HepG2 (cell line): ENCODE measurements at regions of chr21 and their contacts with region 1.

Region 1: DNA sequence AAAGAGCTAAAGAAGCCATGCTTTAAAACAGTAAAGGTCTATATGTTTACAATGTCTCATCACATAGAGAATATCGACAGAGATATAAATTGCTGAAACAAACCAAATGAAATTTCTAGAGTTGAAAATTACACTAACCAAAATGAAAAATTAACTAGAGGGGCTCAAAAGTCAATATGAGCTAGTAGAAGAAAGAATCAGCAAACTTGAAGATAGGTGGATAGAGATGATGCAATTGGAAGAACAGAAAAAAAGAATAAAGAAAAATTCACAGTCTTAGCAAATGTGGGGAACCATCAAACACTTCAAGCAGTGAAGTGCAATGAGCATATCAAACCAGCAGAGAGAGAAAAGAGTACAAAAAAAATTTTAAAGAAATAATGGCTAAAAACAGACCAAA is 24.1 kb upstream of the DSCAM start:
- DNase-seq: no peak
- ATAC-seq: no peak
- H3K4me3 ChIP-seq: no peak overlapping the region
- H3K27ac ChIP-seq: no peak overlapping the region
- H3K4me1 ChIP-seq: no peaks in the 10 kb centered on the region
- H3K27me3 ChIP-seq: no peaks in the 10 kb centered on the region; a peak in 1 of 5 replicates
- CTCF ChIP-seq: no peak
- EP300 ChIP-seq: no peak
- POLR2A ChIP-seq: no peak
- RAD21 ChIP-seq: no peak

Region 2: GRCh38 chr21:40797891-40798290 is 73.2 kb before region 1 on chr21:
- CTCF ChIA-PET with region 1: no interaction called
- POLR2A ChIA-PET with region 1: no interaction called
- in situ Hi-C with region 1: no loop called
- intact Hi-C with region 1: no loop called
- DNase-seq: no peak
- ATAC-seq: no peak
- H3K4me3 ChIP-seq: no peak overlapping the region
- H3K27ac ChIP-seq: no peak overlapping the region
- H3K4me1 ChIP-seq: no peaks in the 10 kb centered on the region
- H3K27me3 ChIP-seq: no peaks in the 10 kb centered on the region
- CTCF ChIP-seq: no peak
- EP300 ChIP-seq: no peak
- POLR2A ChIP-seq: no peak
- RAD21 ChIP-seq: no peak

Region 3: DNA sequence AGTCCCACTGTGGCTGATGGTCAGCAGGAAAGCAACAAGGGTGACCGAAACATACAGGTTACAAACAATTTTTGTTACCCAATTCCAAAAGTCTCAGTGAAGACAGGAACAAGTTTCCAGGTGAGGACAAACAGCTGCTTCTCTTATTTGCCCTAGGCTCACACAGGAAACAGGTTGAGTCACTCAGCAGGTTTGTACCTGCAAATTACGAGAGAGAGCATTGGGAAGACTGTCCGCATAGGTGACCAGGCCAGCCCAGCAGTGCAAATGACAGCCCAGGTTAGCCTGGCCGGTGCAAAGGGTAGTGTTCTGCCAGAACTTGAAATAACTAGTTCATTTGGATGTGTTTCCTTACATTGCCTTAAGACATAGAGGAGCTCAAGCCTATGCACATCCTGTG is 15.8 kb after region 1 on chr21:
- CTCF ChIA-PET with region 1: no interaction called
- POLR2A ChIA-PET with region 1: no interaction called
- in situ Hi-C with region 1: no loop called
- intact Hi-C with region 1: loop called (anchors 2 kb)
- DNase-seq: no peak
- ATAC-seq: no peak
- H3K4me3 ChIP-seq: no peak overlapping the region
- H3K27ac ChIP-seq: no peak overlapping the region
- H3K4me1 ChIP-seq: no peaks in the 10 kb centered on the region
- H3K27me3 ChIP-seq: no peaks in the 10 kb centered on the region
- CTCF ChIP-seq: no peak
- EP300 ChIP-seq: no peak
- POLR2A ChIP-seq: no peak
- RAD21 ChIP-seq: no peak